Activated B cell treated with CpG ODN at 0.5 μM for 24 hours (primary cell): ENCODE measurements at regions of chr16 and their contacts with region 1.

Region 1: DNA sequence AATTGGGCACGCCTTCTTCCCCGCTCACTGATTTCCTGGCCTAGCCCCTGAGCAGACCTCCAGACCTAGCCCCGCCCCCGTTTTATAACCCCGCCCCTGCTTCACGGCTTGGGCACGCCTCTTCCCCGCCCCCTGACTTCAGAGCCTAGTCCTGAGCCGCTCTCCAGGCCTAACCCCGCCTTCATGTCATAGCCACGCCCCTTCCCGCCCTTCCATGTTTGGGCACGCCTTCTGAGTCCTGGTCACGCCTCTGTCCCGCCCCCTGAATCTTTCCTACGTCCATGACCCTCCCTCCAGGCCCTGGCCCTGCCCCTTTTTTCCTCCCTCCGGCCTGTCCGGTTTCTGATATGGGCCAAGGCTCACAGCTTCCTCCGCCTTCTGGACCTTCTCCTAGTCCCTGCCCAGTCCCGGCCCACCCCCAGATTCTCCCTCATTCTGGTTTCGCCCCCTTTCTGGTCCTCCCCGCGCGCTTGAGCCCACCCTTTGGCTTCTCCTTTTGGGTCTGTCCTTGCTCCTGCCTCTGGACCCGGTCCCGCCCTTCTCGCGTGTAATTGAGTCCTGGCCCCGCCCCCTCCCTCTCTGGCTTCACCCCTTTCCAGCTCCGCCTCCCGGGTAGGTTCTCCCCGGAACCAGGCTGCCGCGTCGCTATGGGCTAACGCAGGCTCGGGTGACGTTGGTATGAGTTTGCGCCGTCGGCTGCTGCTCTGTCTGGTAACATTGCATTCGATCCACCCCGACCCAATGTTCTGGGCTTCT is 15.1 kb upstream of the EEF2K start:
- DNase-seq: peak; percentile 98
- ATAC-seq: peak; percentile 65
- H3K4me3 Mint-ChIP-seq: peak overlapping the region; percentile 95
- H3K27ac Mint-ChIP-seq: peak overlapping the region; percentile 100
- H3K4me1 Mint-ChIP-seq: peaks cover 77% of the 10 kb centered on the region
- H3K27me3 Mint-ChIP-seq: peaks cover 2% of the 10 kb centered on the region
- CTCF ChIP-seq: no peak

Region 2: DNA sequence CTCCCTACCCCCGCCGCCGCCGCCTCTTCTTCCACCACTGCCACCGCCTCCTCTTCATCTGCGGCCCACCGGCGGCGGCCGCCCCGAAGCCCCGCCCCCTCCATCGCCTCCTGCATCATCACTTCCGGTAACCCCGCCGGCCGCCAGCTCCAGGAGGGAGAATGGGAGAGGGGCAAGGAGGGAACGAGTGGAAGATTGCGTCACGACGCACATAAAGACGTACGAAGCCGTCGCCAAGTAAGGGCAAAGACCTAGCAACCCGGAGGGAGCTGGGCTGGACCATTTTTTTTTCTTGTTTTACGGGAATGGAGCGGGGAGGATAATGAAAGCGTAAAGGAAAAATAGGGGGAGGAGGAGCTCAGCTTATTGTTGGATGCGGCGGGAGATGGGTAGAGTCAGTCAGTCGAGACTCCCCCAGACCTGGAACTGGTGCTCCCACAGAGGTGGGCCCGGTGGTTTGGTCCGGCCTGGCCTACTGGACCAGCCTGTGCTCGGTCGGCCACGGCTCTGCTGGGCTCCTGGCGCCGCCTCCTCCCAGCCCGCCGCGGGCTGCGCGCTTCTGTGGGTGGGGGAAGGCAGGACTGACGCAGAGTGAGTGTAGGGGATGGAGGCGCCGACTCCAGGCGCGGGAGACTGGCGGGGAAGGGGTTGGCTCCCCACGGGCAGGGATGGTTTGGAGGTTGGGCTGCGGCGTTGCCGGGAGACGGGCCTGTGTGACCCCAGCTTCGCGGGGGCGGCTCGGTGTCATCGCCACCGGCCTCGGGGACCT is 1290.5 kb before region 1 on chr16 and contains the starts of genes DCUN1D3 and LYRM1:
- CTCF ChIA-PET with region 1: no interaction called
- POLR2A ChIA-PET with region 1: interaction called, 3 read pairs
- intact Hi-C with region 1: loop called (anchors 1 kb)
- DNase-seq: peak; percentile 75
- ATAC-seq: peak; percentile 76
- H3K4me3 Mint-ChIP-seq: peak within 1 kb of the TSS; percentile 91
- H3K27ac Mint-ChIP-seq: peak within 1 kb of the TSS; percentile 95
- H3K4me1 Mint-ChIP-seq: peaks cover 61% of the 10 kb centered on the region
- H3K27me3 Mint-ChIP-seq: no peaks in the 10 kb centered on the region
- CTCF ChIP-seq: no peak
- total RNA-seq, gene DCUN1D3: 4.1 and 4.7 TPM in 2 replicates
- total RNA-seq, gene LYRM1: 20.7 and 22.4 TPM in 2 replicates

Region 3: GRCh38 chr16:21708533-21709115 is 482.3 kb before region 1 on chr16:
- CTCF ChIA-PET with region 1: no interaction called
- POLR2A ChIA-PET with region 1: no interaction called
- intact Hi-C with region 1: loop called (anchors 5 kb)
- DNase-seq: peak; percentile 51
- ATAC-seq: peak; percentile 68
- H3K4me3 Mint-ChIP-seq: no peak overlapping the region
- H3K27ac Mint-ChIP-seq: no peak overlapping the region
- H3K4me1 Mint-ChIP-seq: peaks cover 9% of the 10 kb centered on the region
- H3K27me3 Mint-ChIP-seq: no peaks in the 10 kb centered on the region
- CTCF ChIP-seq: no peak

Region 4: DNA sequence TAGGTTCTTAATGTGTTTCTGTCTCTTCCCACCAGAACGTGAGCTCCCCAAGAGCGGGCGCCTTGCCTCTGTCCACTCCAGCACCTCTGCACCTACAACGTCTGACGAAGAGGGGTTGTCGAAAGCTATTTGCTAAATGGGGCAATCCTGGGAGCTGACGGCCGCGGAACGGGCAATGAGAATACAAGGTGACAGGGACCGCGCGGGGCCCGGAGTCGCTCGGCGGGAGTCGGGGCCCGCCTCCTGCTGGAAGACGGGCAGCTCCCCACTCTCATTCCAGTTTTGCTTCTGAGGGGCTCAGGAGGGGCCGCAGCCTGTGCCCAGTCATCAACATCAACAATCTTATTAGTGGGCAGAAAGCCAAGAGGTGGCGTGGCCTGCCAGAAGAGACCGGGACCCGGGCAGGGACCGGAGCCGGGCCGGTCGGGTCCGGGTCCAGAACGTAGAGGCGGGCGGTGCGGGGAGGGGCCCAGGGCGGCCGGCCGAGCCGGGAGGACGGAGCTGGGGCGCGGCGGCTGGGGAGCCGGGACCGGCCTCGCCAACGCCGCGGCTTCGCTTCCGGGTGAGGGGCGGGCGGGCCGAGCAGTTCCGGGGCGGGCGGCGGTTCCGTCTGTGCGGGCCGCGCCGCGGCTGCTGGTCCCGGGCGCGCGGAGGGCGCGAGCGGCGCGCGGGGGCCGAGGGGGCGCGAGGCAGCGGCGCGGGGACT is 183.3 kb before region 1 on chr16 and contains the start of gene MOSMO:
- CTCF ChIA-PET with region 1: interaction called, 66 read pairs
- POLR2A ChIA-PET with region 1: interaction called, 45 read pairs
- intact Hi-C with region 1: no loop called
- DNase-seq: peak; percentile 69
- ATAC-seq: peak; percentile 90
- H3K4me3 Mint-ChIP-seq: peak within 1 kb of the TSS; percentile 89
- H3K27ac Mint-ChIP-seq: peak within 1 kb of the TSS; percentile 79
- H3K4me1 Mint-ChIP-seq: peaks cover 40% of the 10 kb centered on the region
- H3K27me3 Mint-ChIP-seq: no peaks in the 10 kb centered on the region
- CTCF ChIP-seq: no peak
- total RNA-seq, gene MOSMO: 14.3 and 21.3 TPM in 2 replicates

Region 5: GRCh38 chr16:22206013-22206841 is 15.3 kb after region 1 on chr16 and contains the start of gene EEF2K:
- CTCF ChIA-PET with region 1: interaction called, 24 read pairs
- POLR2A ChIA-PET with region 1: interaction called, 154 read pairs
- intact Hi-C with region 1: loop called (anchors 1 kb)
- DNase-seq: peak; percentile 75
- ATAC-seq: peak; percentile 80
- H3K4me3 Mint-ChIP-seq: peak within 1 kb of the TSS; percentile 89
- H3K27ac Mint-ChIP-seq: peak within 1 kb of the TSS; percentile 77
- H3K4me1 Mint-ChIP-seq: peaks cover 38% of the 10 kb centered on the region
- H3K27me3 Mint-ChIP-seq: no peaks in the 10 kb centered on the region
- CTCF ChIP-seq: peak; percentile 39
- total RNA-seq, gene EEF2K: 26.5 and 29.7 TPM in 2 replicates

Region 6: GRCh38 chr16:22374311-22375116 is 183.6 kb after region 1 on chr16 and contains the start of gene CDR2:
- CTCF ChIA-PET with region 1: no interaction called
- POLR2A ChIA-PET with region 1: interaction called, 3 read pairs
- intact Hi-C with region 1: loop called (anchors 5 kb)
- DNase-seq: peak; percentile 90
- ATAC-seq: peak; percentile 95
- H3K4me3 Mint-ChIP-seq: peak within 1 kb of the TSS; percentile 94
- H3K27ac Mint-ChIP-seq: peak within 1 kb of the TSS; percentile 70
- H3K4me1 Mint-ChIP-seq: peaks cover 22% of the 10 kb centered on the region
- H3K27me3 Mint-ChIP-seq: no peaks in the 10 kb centered on the region
- CTCF ChIP-seq: no peak
- total RNA-seq, gene CDR2: 6.2 and 6.7 TPM in 2 replicates

Region 7: GRCh38 chr16:22684574-22685458 is 493.9 kb after region 1 on chr16:
- CTCF ChIA-PET with region 1: no interaction called
- POLR2A ChIA-PET with region 1: no interaction called
- intact Hi-C with region 1: no loop called
- DNase-seq: no peak
- ATAC-seq: no peak
- H3K4me3 Mint-ChIP-seq: no peak overlapping the region
- H3K27ac Mint-ChIP-seq: no peak overlapping the region
- H3K4me1 Mint-ChIP-seq: peaks cover 3% of the 10 kb centered on the region
- H3K27me3 Mint-ChIP-seq: peaks cover 3% of the 10 kb centered on the region
- CTCF ChIP-seq: no peak